GM12878 (cell line): ENCODE measurements at regions of chr1 and their contacts with region 1.

Region 1: GRCh38 chr1:2290595-2291510 is 62.7 kb downstream of the SKI start:
- DNase-seq: peak; percentile 50
- ATAC-seq: peak; percentile 91
- H3K4me3 ChIP-seq: peak overlapping the region; percentile 59
- H3K27ac ChIP-seq: no peak overlapping the region
- H3K4me1 ChIP-seq: peaks cover 23% of the 10 kb centered on the region
- H3K27me3 ChIP-seq: no peaks in the 10 kb centered on the region
- CTCF ChIP-seq: no peak
- EP300 ChIP-seq: peak in 1 of 2 experiments; percentile 56; a peak in 1 of 4 replicates
- POLR2A ChIP-seq: no peak
- RAD21 ChIP-seq: no peak

Region 2: DNA sequence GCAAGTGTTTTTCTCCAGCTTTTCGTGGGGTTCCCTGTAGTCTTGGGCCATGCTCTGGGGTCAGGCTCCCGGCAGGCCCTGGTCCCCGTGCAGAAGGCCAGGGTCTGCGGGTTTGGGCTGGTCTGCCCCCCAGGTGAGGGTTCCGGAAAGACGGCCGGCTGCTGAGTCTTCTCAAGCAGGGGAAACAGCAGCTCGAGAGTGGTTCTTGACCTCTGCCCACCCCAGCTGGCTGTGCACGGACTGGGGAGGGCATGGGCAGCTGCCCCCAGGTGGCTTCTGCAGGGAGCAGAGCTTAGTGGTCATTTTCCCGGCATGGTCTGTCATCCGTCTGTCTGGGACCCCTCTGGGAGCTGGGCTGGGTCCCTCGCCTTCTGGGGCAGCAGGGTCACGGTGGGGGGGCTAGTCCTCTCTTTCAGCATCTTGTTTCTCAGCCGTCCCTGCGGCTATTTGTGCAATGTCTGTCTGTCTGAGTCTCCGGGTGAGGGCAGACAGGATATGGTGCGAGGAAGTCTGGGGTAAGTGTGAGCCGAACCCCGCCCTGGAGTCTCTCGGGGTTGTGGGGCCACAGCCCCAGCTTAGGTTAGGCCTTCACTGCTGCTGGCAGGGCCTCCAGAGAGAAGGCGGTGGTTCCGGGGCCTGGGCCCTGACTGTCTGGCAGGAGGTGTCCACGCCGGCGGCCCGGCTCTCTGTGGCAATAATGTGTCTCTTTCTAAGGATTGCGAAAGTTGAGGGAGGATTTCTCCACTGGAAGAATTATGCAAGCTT is 56.7 kb before region 1 on chr1:
- CTCF ChIA-PET with region 1: no interaction called
- POLR2A ChIA-PET with region 1: interaction called, 3 read pairs
- RAD21 ChIA-PET with region 1: no interaction called
- SMC1A ChIA-PET with region 1: interaction called, 3 read pairs
- in situ Hi-C with region 1: no loop called
- intact Hi-C with region 1: loop called (anchors 10 kb)
- DNase-seq: no peak
- ATAC-seq: peak; percentile 79
- H3K4me3 ChIP-seq: peak overlapping the region; percentile 57; the same call in 1 of the 2 replicates
- H3K27ac ChIP-seq: peak overlapping the region; percentile 61
- H3K4me1 ChIP-seq: peaks cover 34% of the 10 kb centered on the region
- H3K27me3 ChIP-seq: no peaks in the 10 kb centered on the region
- CTCF ChIP-seq: no peak
- EP300 ChIP-seq: no peak
- POLR2A ChIP-seq: no peak
- RAD21 ChIP-seq: no peak

Region 3: DNA sequence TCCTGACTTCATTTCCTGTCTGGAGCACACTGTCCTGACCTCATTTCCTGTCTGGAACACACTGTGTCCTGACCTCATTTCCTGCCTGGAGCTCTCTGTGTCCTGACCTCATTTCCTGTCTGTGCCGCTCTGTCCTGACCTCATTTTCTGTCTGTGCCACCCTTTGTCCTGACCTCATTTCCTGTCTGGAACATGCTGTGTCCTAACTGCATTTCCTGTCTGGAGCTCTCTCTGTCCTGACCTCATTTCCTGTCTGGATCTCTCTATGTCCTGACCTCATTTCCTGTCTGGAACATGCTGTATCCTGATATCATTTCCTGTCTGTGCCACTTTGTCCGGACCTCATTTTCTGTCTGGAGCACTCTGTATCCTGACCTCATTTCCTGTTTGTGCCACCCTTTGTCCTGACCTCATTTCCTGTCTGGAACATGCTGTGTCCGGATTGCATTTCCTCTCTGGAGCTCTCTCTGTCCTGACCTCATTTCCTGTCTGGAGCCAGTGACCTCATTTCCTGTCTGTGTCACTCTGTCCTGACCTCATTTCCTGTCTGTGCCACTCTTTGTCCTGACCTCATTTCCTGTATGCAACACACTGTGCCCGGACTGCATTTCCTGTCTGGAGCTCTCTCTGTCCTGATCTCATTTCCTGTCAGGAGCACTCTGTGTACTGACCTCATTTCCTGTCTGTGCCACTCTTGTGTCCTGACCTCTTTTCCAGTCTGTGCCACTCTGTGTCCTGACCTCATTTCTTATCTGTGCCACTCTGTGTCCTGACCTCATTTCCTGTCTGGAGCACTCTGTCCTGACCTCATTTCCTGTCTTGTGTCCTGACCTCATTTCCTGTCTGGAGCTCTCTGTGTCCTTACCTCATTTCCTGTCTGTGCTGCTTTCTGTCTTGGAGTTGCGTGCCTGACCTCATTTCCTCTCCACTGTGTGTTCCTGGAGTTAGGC is 35.2 kb before region 1 on chr1:
- CTCF ChIA-PET with region 1: no interaction called
- POLR2A ChIA-PET with region 1: no interaction called
- RAD21 ChIA-PET with region 1: no interaction called
- SMC1A ChIA-PET with region 1: interaction called, 3 read pairs
- in situ Hi-C with region 1: loop called (anchors 5 kb)
- intact Hi-C with region 1: loop called (anchors 2 kb)
- DNase-seq: peak; percentile 78
- ATAC-seq: peak; percentile 84
- H3K4me3 ChIP-seq: no peak overlapping the region
- H3K27ac ChIP-seq: peak overlapping the region; percentile 68
- H3K4me1 ChIP-seq: peaks cover 17% of the 10 kb centered on the region
- H3K27me3 ChIP-seq: no peaks in the 10 kb centered on the region
- CTCF ChIP-seq: no peak
- EP300 ChIP-seq: no peak
- POLR2A ChIP-seq: no peak
- RAD21 ChIP-seq: no peak

Region 4: DNA sequence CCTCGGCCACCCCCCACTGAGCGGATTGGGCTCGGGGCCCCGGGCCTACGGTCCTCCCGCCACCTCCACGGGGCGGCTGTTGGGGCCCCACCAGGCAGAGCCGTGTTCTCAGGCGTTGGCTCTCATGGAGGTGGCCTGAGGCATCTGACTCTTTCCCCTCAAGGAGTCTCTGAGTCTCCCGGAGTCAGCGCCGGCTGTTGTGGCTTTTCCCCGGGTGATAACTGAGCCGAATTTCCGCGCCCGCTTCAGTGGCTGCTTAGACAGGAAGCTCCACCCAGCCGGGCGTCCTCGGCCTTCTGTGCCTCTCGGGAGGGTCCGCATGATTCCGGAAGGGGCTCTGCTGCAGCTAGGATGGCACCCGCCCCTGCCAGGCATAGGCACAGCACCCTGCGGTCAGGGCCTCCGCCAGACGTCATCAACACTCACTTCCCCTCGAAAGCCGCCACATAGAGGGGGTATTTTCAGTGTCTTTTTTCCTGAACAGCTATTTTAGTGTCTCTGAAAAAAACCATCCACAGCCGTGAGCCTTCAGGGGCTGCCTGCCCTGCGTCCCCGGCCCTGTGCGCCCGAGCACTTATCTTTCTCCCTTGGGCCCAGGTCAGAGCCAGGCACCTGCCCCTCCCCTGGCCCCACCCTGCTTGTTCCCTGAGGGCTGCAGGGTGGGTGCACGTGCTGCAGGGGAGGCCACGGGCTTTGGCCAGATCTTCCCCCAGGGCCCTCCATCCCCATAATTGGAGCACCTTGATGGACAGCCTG is 10.2 kb after region 1 on chr1:
- CTCF ChIA-PET with region 1: interaction called, 6 read pairs
- POLR2A ChIA-PET with region 1: interaction called, 3 read pairs
- RAD21 ChIA-PET with region 1: interaction called, 4 read pairs
- SMC1A ChIA-PET with region 1: interaction called, 13 read pairs
- in situ Hi-C with region 1: no loop called
- intact Hi-C with region 1: no loop called
- DNase-seq: peak; percentile 76
- ATAC-seq: peak; percentile 89
- H3K4me3 ChIP-seq: peak overlapping the region; percentile 71
- H3K27ac ChIP-seq: peak overlapping the region; percentile 91
- H3K4me1 ChIP-seq: peaks cover 28% of the 10 kb centered on the region
- H3K27me3 ChIP-seq: no peaks in the 10 kb centered on the region
- CTCF ChIP-seq: no peak
- EP300 ChIP-seq: peak; percentile 81 to 84; a peak in 3 of 4 replicates
- POLR2A ChIP-seq: peak; percentile 47; the same call in 1 of the 2 replicates
- RAD21 ChIP-seq: no peak